ENCODE measurements at regions of chrX and their contacts with region 1.

Region 1: GRCh38 chrX:15493118-15493962 is at the start of gene PIR:
- DNase-seq: peak; percentile 55
- H3K4me3 Mint-ChIP-seq: peak within 1 kb of the TSS; percentile 81
- H3K27ac Mint-ChIP-seq: peak within 1 kb of the TSS; percentile 47
- H3K4me1 Mint-ChIP-seq: peaks cover 20% of the 10 kb centered on the region
- H3K27me3 Mint-ChIP-seq: peaks cover 5% of the 10 kb centered on the region
- total RNA-seq, gene PIR: 5.1 and 5.9 TPM in 2 replicates

Region 2: DNA sequence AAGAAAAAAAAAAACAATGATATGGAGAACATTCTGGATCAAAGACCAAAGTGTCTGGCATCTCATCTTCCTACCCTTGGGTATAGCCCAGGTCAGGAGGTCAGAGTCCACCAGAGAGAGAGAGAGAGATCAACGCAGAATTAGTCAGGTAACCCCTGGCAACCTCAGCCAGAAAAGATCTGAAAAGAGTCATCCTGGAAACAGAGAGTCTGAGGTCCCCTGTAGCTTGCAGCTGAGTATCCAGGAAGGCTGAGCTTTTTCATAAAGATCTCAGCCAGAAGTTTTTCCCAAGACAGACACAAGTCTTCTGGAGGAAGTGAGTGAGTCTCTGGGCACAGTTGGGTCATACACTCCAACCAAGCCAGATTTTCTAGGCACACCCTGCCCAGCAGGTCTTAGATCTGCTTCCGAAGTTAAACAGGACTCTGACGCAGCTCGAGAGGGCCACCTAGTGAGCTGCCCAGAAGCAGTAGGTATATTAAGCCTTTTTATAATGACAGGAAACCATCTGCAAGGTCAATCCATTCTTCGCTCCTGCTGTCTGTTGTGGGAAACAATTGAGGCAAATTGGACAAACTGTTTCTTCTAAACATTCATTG is 71.7 kb after region 1 on chrX:
- intact Hi-C with region 1: loop called (anchors 1 kb)
- DNase-seq: peak; percentile 9
- H3K4me3 Mint-ChIP-seq: no peak overlapping the region
- H3K27ac Mint-ChIP-seq: no peak overlapping the region
- H3K4me1 Mint-ChIP-seq: no peaks in the 10 kb centered on the region
- H3K27me3 Mint-ChIP-seq: peaks cover 5% of the 10 kb centered on the region